IMR-90 (cell line): ENCODE measurements at regions of chr18 and their contacts with region 1.

Region 1: GRCh38 chr18:68887410-68887809 is 89.5 kb downstream of the CCDC102B start:
- DNase-seq: no peak
- ATAC-seq: no peak
- H3K4me3 ChIP-seq: no peak overlapping the region
- H3K27ac ChIP-seq: no peak overlapping the region
- H3K4me1 ChIP-seq: no peaks in the 10 kb centered on the region
- H3K27me3 ChIP-seq: no peaks in the 10 kb centered on the region
- CTCF ChIP-seq: no peak
- POLR2A ChIP-seq: no peak
- RAD21 ChIP-seq: no peak

Region 2: DNA sequence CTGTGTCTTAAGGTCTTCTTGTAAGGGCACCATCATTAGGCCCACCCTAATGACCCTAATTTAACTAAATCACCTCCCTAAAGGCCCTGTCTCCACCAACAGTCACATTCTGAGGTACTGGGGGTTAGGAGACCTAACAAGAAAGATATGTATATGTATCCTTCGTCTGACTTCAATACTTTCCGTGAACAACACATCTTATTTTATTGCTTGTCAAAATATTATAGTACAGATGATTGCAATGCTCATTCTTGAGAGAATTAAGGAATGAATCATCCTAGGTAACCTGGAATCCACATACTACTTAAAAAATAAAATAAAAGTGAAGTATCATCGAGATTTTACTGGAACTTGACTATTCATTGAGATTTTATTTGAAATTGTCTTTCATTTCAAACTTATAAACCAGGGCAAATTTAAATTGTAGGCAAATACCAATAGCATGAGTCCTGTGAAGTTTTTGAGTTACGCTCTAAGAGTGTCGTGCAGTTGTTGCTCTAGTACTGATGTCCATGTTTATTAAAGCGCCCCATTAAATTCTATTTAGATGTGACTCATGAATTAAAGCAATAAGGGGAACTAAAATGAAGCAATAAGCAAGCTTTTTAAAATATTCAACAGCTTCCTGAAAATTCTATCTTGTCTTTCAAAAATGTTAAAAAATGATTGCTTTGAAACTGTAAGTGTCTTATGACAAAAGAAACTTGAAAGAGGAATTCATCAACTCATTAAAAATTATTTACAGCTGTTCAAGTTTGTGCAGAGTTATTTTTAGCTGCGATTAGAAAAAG is 49.5 kb before region 1 on chr18:
- CTCF ChIA-PET with region 1: no interaction called
- POLR2A ChIA-PET with region 1: no interaction called
- dilution Hi-C with region 1: no loop called
- in situ Hi-C with region 1: no loop called
- intact Hi-C with region 1: no loop called
- DNase-seq: peak; percentile 77
- ATAC-seq: peak; percentile 65
- H3K4me3 ChIP-seq: no peak overlapping the region
- H3K27ac ChIP-seq: peak overlapping the region; percentile 61
- H3K4me1 ChIP-seq: peaks cover 9% of the 10 kb centered on the region
- H3K27me3 ChIP-seq: no peaks in the 10 kb centered on the region
- CTCF ChIP-seq: no peak
- POLR2A ChIP-seq: no peak
- RAD21 ChIP-seq: no peak

Region 3: GRCh38 chr18:69308620-69309019 is 421.2 kb after region 1 on chr18:
- CTCF ChIA-PET with region 1: no interaction called
- POLR2A ChIA-PET with region 1: no interaction called
- dilution Hi-C with region 1: no loop called
- in situ Hi-C with region 1: no loop called
- intact Hi-C with region 1: loop called (anchors 10 kb)
- DNase-seq: no peak
- ATAC-seq: no peak
- H3K4me3 ChIP-seq: no peak overlapping the region
- H3K27ac ChIP-seq: no peak overlapping the region
- H3K4me1 ChIP-seq: no peaks in the 10 kb centered on the region
- H3K27me3 ChIP-seq: no peaks in the 10 kb centered on the region
- CTCF ChIP-seq: no peak
- POLR2A ChIP-seq: no peak
- RAD21 ChIP-seq: no peak